ENCODE measurements at regions of chr1 and their contacts with region 1.

Region 1: DNA sequence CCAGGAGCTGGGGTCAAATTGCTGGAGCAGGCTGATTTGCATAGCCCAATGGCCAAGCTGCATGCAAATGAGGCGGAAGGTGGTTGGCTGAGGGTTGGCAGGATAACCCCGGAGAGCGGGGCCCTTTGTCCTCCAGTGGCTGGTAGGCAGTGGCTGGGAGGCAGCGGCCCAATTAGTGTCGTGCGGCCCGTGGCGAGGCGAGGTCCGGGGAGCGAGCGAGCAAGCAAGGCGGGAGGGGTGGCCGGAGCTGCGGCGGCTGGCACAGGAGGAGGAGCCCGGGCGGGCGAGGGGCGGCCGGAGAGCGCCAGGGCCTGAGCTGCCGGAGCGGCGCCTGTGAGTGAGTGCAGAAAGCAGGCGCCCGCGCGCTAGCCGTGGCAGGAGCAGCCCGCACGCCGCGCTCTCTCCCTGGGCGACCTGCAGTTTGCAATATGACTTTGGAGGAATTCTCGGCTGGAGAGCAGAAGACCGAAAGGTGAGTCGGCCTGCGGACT is at the start of gene GADD45A:
- DNase-seq: peak; percentile 96 to 98 (median 97)
- H3K4me3 ChIP-seq: peak within 1 kb of the TSS; percentile 90
- H3K27ac ChIP-seq: peak within 1 kb of the TSS; percentile 84 to 88
- H3K4me1 ChIP-seq: peaks cover 8% of the 10 kb centered on the region
- H3K27me3 ChIP-seq: no peaks in the 10 kb centered on the region
- CTCF ChIP-seq: no peak
- EP300 ChIP-seq: no peak
- POLR2A ChIP-seq: peak; percentile 98
- total RNA-seq, gene GADD45A: 22.1 to 132 (median 36.2) TPM

Region 2: DNA sequence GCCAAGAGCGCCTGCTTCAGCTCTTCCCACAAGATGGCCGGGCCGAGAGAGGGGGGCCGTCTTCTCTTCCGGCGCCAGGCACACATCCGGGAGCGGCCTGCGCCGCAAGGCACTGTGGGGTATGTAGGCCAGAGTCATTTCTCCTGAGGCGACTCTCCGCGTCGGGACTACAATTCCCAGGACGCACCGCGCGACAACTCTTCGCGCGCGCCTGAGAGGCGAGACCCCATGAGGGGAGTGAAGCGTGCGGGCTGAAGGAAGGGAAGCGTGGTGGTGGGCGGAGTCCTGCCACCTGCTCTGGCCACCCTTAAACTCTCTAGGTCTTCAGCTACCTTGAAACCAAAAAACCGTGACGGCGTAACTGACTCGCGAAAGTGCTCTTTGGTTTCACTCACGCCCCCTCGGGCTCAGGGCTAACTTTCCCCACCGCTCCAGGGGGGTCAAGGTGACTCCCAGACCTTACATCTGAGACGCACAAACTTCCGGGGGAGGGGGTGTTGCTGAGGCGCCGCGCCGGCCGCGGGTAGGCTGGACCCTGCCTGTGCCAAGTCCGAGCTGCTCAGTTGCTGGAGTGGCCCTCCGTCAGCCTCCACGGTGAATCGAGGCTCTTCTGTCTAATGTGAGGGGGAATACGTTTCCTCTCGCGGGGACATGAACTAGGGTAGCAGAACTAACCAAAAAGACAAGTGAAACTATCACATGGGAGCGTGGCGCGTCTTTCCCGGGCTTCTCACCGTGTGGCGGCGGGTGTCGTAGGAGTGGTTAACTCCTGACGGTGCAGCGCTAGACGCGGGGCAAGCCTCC is 254.6 kb before region 1 on chr1 and contains the start of gene SERBP1:
- intact Hi-C with region 1: no loop called
- DNase-seq: peak; percentile 94 to 97 (median 96)
- H3K4me3 ChIP-seq: peak within 1 kb of the TSS; percentile 67
- H3K27ac ChIP-seq: peak within 1 kb of the TSS; percentile 82 to 97
- H3K4me1 ChIP-seq: peaks cover 2% of the 10 kb centered on the region
- H3K27me3 ChIP-seq: no peaks in the 10 kb centered on the region
- CTCF ChIP-seq: peak in 1 of 3 donors; percentile 12
- EP300 ChIP-seq: peak; percentile 17
- POLR2A ChIP-seq: peak; percentile 82
- total RNA-seq, gene SERBP1: 117 to 163 (median 150) TPM

Region 3: DNA sequence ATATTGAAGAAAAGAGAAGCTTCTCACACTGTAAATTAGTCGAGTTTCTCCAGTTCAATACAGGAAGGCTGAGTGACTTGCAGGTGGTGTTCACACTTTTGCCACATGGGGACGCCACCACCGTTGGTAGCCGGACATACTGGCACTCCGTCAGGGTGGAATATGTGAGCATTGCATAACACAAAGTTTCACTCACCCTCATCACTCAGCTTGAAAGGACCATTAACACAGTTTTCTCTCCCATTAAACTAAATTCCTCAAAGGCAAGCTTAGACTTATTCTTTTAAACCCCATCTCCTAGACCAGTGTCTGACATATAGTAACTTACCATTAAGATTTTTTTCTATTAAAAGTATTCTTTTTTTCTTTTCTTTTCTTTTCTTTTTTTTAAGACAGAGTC is 149.6 kb before region 1 on chr1:
- intact Hi-C with region 1: loop called in 3 of 4 experiments (anchors 5 to 10 kb)
- DNase-seq: peak; percentile 75 to 88 (median 85)
- H3K4me3 ChIP-seq: no peak overlapping the region
- H3K27ac ChIP-seq: no peak overlapping the region
- H3K4me1 ChIP-seq: no peaks in the 10 kb centered on the region
- H3K27me3 ChIP-seq: no peaks in the 10 kb centered on the region
- CTCF ChIP-seq: peak; percentile 80 to 94 (median 91)
- EP300 ChIP-seq: no peak
- POLR2A ChIP-seq: no peak

Region 4: GRCh38 chr1:67561704-67562113 is 123.4 kb before region 1 on chr1:
- intact Hi-C with region 1: loop called in 2 of 4 experiments (anchors 10 kb)
- DNase-seq: peak; percentile 81 to 89 (median 85)
- H3K4me3 ChIP-seq: no peak overlapping the region
- H3K27ac ChIP-seq: no peak overlapping the region
- H3K4me1 ChIP-seq: peaks cover 4% of the 10 kb centered on the region
- H3K27me3 ChIP-seq: no peaks in the 10 kb centered on the region
- CTCF ChIP-seq: peak; percentile 36 to 43 (median 43)
- EP300 ChIP-seq: no peak
- POLR2A ChIP-seq: no peak

Region 5: DNA sequence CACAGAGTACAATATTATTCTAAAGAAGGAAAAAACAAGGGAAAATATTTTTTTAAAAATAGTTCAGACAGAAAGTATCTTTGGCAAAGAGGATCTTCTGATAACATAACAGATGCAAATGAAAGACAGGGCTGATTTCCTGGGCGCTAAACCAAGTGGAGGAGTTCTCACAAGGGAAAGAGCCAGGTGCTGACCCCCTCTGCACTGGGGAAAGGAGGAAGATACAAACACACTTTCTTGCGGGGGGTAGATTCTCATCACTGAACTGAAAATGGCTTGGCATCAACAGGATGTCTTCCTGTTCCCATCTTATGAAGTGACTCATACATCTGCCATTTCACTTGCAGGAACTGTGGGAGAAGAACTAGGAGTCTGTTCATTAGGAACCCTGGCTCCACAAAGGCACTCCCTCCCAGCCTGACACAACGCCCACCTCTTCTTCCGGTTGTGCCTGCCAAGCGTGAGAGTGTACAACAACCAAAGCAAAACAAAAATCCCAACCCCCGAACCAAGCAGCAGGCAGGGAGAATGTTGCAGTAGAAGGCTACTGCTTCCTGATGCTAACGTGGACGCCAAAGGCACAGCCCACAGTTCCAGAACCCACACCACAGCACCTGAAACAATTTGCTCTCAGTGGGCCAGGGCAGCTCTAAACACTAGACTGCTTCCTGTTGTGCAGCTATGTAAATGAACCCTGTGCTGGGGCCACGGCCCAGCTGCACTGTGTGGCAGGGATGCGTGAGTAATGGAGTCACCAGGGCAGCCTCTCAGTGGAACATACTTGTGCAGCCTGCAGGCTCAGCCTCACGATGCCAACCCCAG is 50.9 kb after region 1 on chr1:
- intact Hi-C with region 1: loop called in 1 of 4 experiments (anchors 2 kb)
- DNase-seq: peak; percentile 75 to 90 (median 83)
- H3K4me3 ChIP-seq: peak overlapping the region; percentile 1
- H3K27ac ChIP-seq: peak overlapping the region in 1 of 2 donors; percentile 41
- H3K4me1 ChIP-seq: peaks cover 12% of the 10 kb centered on the region
- H3K27me3 ChIP-seq: no peaks in the 10 kb centered on the region
- CTCF ChIP-seq: no peak
- EP300 ChIP-seq: peak; percentile 23
- POLR2A ChIP-seq: no peak

Region 6: DNA sequence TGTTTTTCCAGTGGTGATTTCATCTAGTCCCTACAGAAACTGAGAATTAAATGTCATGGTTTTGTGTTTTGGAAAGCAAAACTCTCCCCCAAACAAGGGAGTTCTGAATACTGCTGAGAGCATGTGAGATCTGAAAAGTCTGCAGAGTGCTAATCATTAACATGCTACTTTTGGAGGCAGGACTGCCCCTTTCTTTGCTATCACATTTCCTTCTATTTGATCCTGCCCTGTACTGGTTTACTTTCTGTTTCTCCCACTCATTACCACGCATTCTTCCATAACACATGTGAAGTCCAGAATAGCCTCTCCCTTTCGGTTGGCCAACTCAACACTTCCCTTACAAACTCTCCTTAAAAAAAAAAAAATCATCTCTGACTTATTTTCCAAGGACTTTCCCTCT is 63.5 kb after region 1 on chr1:
- intact Hi-C with region 1: loop called in 2 of 4 experiments (anchors 5 kb)
- DNase-seq: no peak
- H3K4me3 ChIP-seq: peak overlapping the region; percentile 6
- H3K27ac ChIP-seq: peak overlapping the region; percentile 27 to 54
- H3K4me1 ChIP-seq: peaks cover 18% of the 10 kb centered on the region
- H3K27me3 ChIP-seq: no peaks in the 10 kb centered on the region
- CTCF ChIP-seq: no peak
- EP300 ChIP-seq: no peak
- POLR2A ChIP-seq: no peak

Measured in ovary (tissue), 10 donors.